Activated CD8-positive, alpha-beta T cell treated with anti-CD3 and anti-CD28 coated beads, Interleukin-2, amount 10 ng/mL, durations not matched to agents 7 days and 5 days (primary cell): ENCODE measurements at regions of chr14 and their contacts with region 1.

Region 1: GRCh38 chr14:105480952-105481801 is 5.5 kb upstream of the CRIP1 start:
- DNase-seq: peak; percentile 91
- ATAC-seq: peak; percentile 45
- H3K4me3 Mint-ChIP-seq: peak overlapping the region; percentile 55
- H3K27ac Mint-ChIP-seq: peak overlapping the region; percentile 98
- H3K4me1 Mint-ChIP-seq: peaks cover 49% of the 10 kb centered on the region
- H3K27me3 Mint-ChIP-seq: peaks cover 23% of the 10 kb centered on the region

Region 2: DNA sequence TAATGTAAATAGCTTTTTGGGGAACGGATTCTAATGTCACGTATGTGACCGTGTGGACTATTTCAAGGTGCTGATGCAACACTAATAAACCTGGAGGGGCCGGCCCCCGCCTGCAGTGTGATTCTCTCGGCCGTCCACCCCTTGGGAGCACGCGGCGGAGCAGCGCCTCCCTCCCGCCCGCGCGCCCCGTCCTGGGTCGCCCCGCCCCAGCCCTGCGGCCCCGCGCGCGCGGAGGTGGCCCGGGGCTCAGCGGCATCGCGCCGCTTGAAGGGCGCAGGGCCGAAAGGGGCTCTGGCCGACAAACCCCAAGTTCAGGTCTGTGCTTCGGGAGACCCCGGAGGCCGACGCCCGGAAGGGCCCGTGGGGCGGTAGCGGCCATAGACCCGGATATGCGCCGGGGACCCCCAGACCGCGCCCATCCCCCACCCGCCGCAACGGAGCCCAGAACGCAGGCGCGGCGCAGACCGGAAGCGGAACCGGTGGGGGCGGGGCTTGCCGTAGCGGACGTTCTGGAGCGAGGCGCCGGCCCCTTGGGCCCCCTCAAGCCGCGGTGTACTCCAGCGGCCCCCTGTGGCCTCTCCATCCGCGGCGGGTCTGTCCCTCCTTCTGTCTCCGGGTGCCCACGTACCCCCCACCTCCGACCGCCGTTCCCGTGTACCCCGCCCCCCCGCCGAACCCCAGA is 83.0 kb before region 1 on chr14 and contains the start of gene TEX22:
- CTCF ChIA-PET with region 1: interaction called, 11 read pairs
- POLR2A ChIA-PET with region 1: interaction called, 9 read pairs
- DNase-seq: peak; percentile 93
- ATAC-seq: peak; percentile 88
- H3K4me3 Mint-ChIP-seq: peak within 1 kb of the TSS; percentile 95
- H3K27ac Mint-ChIP-seq: peak within 1 kb of the TSS; percentile 94
- H3K4me1 Mint-ChIP-seq: peaks cover 39% of the 10 kb centered on the region
- H3K27me3 Mint-ChIP-seq: no peaks in the 10 kb centered on the region
- total RNA-seq, gene TEX22: 1.9 to 2.4 TPM

Region 3: GRCh38 chr14:105456736-105457617 is 24.2 kb before region 1 on chr14:
- CTCF ChIA-PET with region 1: no interaction called
- POLR2A ChIA-PET with region 1: no interaction called
- DNase-seq: no peak
- ATAC-seq: no peak
- H3K4me3 Mint-ChIP-seq: no peak overlapping the region
- H3K27ac Mint-ChIP-seq: no peak overlapping the region
- H3K4me1 Mint-ChIP-seq: no peaks in the 10 kb centered on the region
- H3K27me3 Mint-ChIP-seq: no peaks in the 10 kb centered on the region

Region 4: GRCh38 chr14:105470804-105471610 is 10.2 kb before region 1 on chr14:
- CTCF ChIA-PET with region 1: interaction called, 10 read pairs
- POLR2A ChIA-PET with region 1: interaction called, 3 read pairs
- DNase-seq: no peak
- ATAC-seq: no peak
- H3K4me3 Mint-ChIP-seq: no peak overlapping the region
- H3K27ac Mint-ChIP-seq: no peak overlapping the region
- H3K4me1 Mint-ChIP-seq: peaks cover 6% of the 10 kb centered on the region
- H3K27me3 Mint-ChIP-seq: peaks cover 3% of the 10 kb centered on the region

Region 5: DNA sequence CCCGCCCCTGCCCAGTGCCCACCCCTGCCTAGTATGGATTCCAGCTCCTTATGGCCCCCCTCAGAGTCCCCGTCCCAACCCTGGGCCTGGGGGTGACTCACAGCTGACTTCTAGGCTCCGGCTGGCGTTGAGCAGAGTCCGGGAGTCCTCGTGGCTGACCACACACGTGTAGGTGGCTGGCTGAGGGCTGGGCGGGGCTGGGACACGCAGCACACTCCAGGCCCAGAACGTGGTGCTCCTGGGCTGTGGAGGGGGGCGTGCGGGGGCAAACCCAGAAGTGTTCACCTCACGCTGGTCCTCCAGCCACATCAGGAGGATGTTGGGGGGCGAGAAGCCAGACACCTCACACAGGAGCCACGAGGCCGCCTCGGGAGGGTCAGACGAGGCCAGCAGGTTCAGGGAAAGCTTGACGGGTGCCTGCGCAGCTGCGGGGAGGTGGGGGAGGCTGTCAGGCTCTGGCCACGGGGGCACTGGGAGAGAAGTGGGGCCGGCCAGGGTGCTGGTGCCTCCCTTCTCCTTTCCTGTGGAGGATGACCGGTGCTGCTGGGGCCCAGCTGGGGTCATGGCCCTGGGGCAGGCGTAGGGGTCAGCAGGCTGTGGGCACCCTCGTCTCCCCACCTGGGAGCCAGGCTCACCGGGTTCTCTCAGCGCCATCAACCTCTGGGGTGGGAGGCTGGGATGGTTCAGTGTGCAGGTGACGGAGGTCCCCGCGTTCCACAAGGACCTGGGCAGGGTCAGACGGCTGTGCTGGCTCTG is 359.3 kb after region 1 on chr14:
- CTCF ChIA-PET with region 1: no interaction called
- POLR2A ChIA-PET with region 1: no interaction called
- DNase-seq: peak; percentile 12
- ATAC-seq: no peak
- H3K4me3 Mint-ChIP-seq: no peak overlapping the region
- H3K27ac Mint-ChIP-seq: no peak overlapping the region
- H3K4me1 Mint-ChIP-seq: no peaks in the 10 kb centered on the region
- H3K27me3 Mint-ChIP-seq: no peaks in the 10 kb centered on the region